ENCODE measurements at regions of chr5 and their contacts with region 1.

Region 1: GRCh38 chr5:141968914-141969608 is at the start of gene RNF14:
- DNase-seq: peak; percentile 95
- ATAC-seq: peak; percentile 91
- H3K4me3 ChIP-seq: peak within 1 kb of the TSS; percentile 63 to 95 (median 86)
- H3K4me3 Mint-ChIP-seq: peak within 1 kb of the TSS; percentile 96
- H3K27ac ChIP-seq: peak within 1 kb of the TSS; percentile 90 to 93
- H3K27ac Mint-ChIP-seq: peak within 1 kb of the TSS; percentile 98
- H3K4me1 ChIP-seq: peaks cover 19 to 34% of the 10 kb centered on the region in 2 donors
- H3K4me1 Mint-ChIP-seq: peaks cover 41% of the 10 kb centered on the region
- H3K27me3 ChIP-seq: no peaks in the 10 kb centered on the region
- H3K27me3 Mint-ChIP-seq: no peaks in the 10 kb centered on the region
- CTCF ChIP-seq: peak; percentile 99
- total RNA-seq, gene RNF14: 26.6 and 28.1 TPM in 2 replicates

Region 2: GRCh38 chr5:141557681-141558136 is 411.4 kb before region 1 on chr5:
- CTCF ChIA-PET with region 1: no interaction called
- POLR2A ChIA-PET with region 1: no interaction called
- intact Hi-C with region 1: no loop called
- DNase-seq: peak; percentile 80
- ATAC-seq: peak; percentile 81
- H3K4me3 ChIP-seq: no peak overlapping the region
- H3K4me3 Mint-ChIP-seq: no peak overlapping the region
- H3K27ac ChIP-seq: no peak overlapping the region
- H3K27ac Mint-ChIP-seq: peak overlapping the region; percentile 80
- H3K4me1 ChIP-seq: no peaks in the 10 kb centered on the region
- H3K4me1 Mint-ChIP-seq: peaks cover 4% of the 10 kb centered on the region
- H3K27me3 ChIP-seq: no peaks in the 10 kb centered on the region
- H3K27me3 Mint-ChIP-seq: no peaks in the 10 kb centered on the region
- CTCF ChIP-seq: peak; percentile 82

Region 3: GRCh38 chr5:141636413-141637122 is 332.5 kb before region 1 on chr5 and contains the starts of genes HDAC3 and RELL2:
- CTCF ChIA-PET with region 1: interaction called, 11 read pairs
- POLR2A ChIA-PET with region 1: no interaction called
- intact Hi-C with region 1: loop called (anchors 1 kb)
- DNase-seq: peak; percentile 94
- ATAC-seq: peak; percentile 89
- H3K4me3 ChIP-seq: peak within 1 kb of the TSS; percentile 70 to 99 (median 82)
- H3K4me3 Mint-ChIP-seq: peak within 1 kb of the TSS; percentile 94
- H3K27ac ChIP-seq: peak within 1 kb of the TSS; percentile 58 to 77
- H3K27ac Mint-ChIP-seq: peak within 1 kb of the TSS; percentile 85
- H3K4me1 ChIP-seq: peaks cover 30 to 36% of the 10 kb centered on the region in 2 donors
- H3K4me1 Mint-ChIP-seq: peaks cover 39% of the 10 kb centered on the region
- H3K27me3 ChIP-seq: no peaks in the 10 kb centered on the region
- H3K27me3 Mint-ChIP-seq: no peaks in the 10 kb centered on the region
- CTCF ChIP-seq: no peak
- total RNA-seq, gene HDAC3: 85.5 and 86.9 TPM in 2 replicates
- total RNA-seq, gene RELL2: 11.6 and 12.1 TPM in 2 replicates

Region 4: GRCh38 chr5:141664732-141665461 is 304.2 kb before region 1 on chr5:
- CTCF ChIA-PET with region 1: interaction called, 13 read pairs
- POLR2A ChIA-PET with region 1: no interaction called
- intact Hi-C with region 1: no loop called
- DNase-seq: peak; percentile 85
- ATAC-seq: peak; percentile 98
- H3K4me3 ChIP-seq: no peak overlapping the region
- H3K4me3 Mint-ChIP-seq: no peak overlapping the region
- H3K27ac ChIP-seq: no peak overlapping the region
- H3K27ac Mint-ChIP-seq: no peak overlapping the region
- H3K4me1 ChIP-seq: peaks cover 4 to 6% of the 10 kb centered on the region in 2 donors
- H3K4me1 Mint-ChIP-seq: peaks cover 4% of the 10 kb centered on the region
- H3K27me3 ChIP-seq: peaks cover 0 to 4% (median 0%) of the 10 kb centered on the region in 4 experiments
- H3K27me3 Mint-ChIP-seq: peaks cover 5% of the 10 kb centered on the region
- CTCF ChIP-seq: peak; percentile 91

Region 5: DNA sequence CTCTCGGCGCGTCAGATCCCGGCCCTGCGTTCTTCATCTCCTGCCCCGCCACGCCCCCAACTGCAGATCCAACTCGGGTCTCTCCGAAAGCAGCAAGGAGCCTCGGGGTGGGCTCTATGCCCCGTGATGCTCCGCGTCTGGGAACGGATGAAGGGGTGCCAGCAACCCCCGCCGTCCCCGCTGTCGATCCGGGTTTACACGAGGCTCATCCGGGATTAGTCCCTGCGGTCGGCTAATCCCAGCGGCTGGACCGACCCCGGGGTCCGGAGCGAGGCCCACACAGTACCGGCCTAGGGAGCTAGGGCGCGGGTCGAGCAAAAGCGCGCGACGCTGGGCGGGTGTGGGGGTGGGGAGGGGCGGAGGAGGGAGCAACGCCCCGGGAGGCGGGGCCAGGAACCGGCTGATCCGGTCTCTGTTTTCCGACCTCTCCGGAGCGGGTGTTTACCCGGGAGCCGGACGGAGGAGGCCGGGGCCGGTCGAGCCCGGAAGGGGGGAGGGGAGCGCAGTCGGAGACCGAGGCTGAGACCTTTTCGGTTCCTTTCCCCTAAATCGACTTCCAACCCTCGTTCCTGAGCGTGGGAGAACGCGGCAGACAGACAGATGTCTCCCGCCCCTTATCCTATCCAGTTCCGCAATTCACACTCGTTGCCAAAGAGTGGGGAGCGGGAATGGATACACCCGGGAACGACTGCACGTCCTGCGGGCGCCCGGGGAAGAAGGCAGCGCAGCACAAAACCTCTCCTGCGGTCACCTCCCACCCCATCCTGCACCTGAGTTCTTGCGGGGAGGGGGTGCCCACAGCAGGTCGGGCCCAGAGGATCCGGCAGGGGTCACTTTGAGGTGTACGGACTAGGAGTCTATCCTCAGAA is 119.5 kb before region 1 on chr5:
- CTCF ChIA-PET with region 1: no interaction called
- POLR2A ChIA-PET with region 1: interaction called, 11 read pairs
- intact Hi-C with region 1: no loop called
- DNase-seq: peak; percentile 79
- ATAC-seq: peak; percentile 83
- H3K4me3 ChIP-seq: peak overlapping the region; percentile 75 to 95 (median 78)
- H3K4me3 Mint-ChIP-seq: peak overlapping the region; percentile 91
- H3K27ac ChIP-seq: peak overlapping the region; percentile 55 to 70
- H3K27ac Mint-ChIP-seq: peak overlapping the region; percentile 88
- H3K4me1 ChIP-seq: peaks cover 9 to 12% of the 10 kb centered on the region in 2 donors
- H3K4me1 Mint-ChIP-seq: peaks cover 9% of the 10 kb centered on the region
- H3K27me3 ChIP-seq: peaks cover 0 to 4% (median 2%) of the 10 kb centered on the region in 4 experiments
- H3K27me3 Mint-ChIP-seq: peaks cover 16% of the 10 kb centered on the region
- CTCF ChIP-seq: no peak

Region 6: GRCh38 chr5:141923448-141924352 is 45.4 kb before region 1 on chr5 and contains the start of gene DELE1:
- CTCF ChIA-PET with region 1: interaction called, 12 read pairs
- POLR2A ChIA-PET with region 1: interaction called, 11 read pairs
- intact Hi-C with region 1: loop called (anchors 1 kb)
- DNase-seq: peak; percentile 94
- ATAC-seq: peak; percentile 94
- H3K4me3 ChIP-seq: peak within 1 kb of the TSS; percentile 63 to 92 (median 85)
- H3K4me3 Mint-ChIP-seq: peak within 1 kb of the TSS; percentile 92
- H3K27ac ChIP-seq: peak within 1 kb of the TSS; percentile 95 to 98
- H3K27ac Mint-ChIP-seq: peak within 1 kb of the TSS; percentile 96
- H3K4me1 ChIP-seq: peaks cover 12 to 18% of the 10 kb centered on the region in 2 donors
- H3K4me1 Mint-ChIP-seq: peaks cover 20% of the 10 kb centered on the region
- H3K27me3 ChIP-seq: no peaks in the 10 kb centered on the region
- H3K27me3 Mint-ChIP-seq: no peaks in the 10 kb centered on the region
- CTCF ChIP-seq: no peak
- total RNA-seq, gene DELE1: 124 and 134 TPM in 2 replicates

Region 7: DNA sequence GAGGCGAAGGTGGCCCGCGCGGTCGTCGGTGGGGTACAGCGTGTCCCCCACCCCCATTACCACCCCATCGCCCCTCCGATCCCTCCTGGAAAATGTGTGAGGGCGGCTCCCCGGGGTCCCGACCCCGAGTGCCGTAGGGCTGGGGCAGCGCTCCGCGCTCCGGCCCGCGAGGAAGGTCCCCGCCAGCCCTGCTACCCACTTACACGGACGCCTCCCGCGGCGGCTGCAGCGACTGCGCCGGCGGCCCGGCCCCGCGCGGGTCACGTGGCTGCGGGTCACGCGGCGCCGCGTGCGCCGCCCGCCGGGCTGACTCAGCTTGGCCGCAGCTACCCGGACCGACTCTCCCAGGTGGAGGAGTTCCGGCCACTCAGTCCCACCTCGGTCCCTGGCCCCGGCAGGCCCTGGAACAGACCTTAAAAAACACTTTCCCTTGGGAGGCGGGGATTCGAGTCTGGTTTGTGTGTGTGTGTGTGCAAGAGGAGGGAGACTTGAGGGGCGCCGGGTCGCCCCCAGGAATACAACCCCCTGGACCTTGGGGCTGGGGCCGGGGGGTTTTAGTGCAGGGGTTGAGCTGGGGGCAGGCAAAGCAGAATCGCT is 43.8 kb after region 1 on chr5 and contains the start of gene GNPDA1:
- CTCF ChIA-PET with region 1: interaction called, 14 read pairs
- POLR2A ChIA-PET with region 1: no interaction called
- intact Hi-C with region 1: loop called (anchors 2 kb)
- DNase-seq: peak; percentile 83
- ATAC-seq: peak; percentile 88
- H3K4me3 ChIP-seq: peak within 1 kb of the TSS; percentile 44 to 74 (median 67)
- H3K4me3 Mint-ChIP-seq: peak within 1 kb of the TSS; percentile 89
- H3K27ac ChIP-seq: peak within 1 kb of the TSS; percentile 45 to 59
- H3K27ac Mint-ChIP-seq: peak within 1 kb of the TSS; percentile 78
- H3K4me1 ChIP-seq: peaks cover 27 to 30% of the 10 kb centered on the region in 2 donors
- H3K4me1 Mint-ChIP-seq: peaks cover 43% of the 10 kb centered on the region
- H3K27me3 ChIP-seq: no peaks in the 10 kb centered on the region
- H3K27me3 Mint-ChIP-seq: peaks cover 3% of the 10 kb centered on the region
- CTCF ChIP-seq: no peak
- total RNA-seq, gene GNPDA1: 12.1 and 15.0 TPM in 2 replicates

Region 8: DNA sequence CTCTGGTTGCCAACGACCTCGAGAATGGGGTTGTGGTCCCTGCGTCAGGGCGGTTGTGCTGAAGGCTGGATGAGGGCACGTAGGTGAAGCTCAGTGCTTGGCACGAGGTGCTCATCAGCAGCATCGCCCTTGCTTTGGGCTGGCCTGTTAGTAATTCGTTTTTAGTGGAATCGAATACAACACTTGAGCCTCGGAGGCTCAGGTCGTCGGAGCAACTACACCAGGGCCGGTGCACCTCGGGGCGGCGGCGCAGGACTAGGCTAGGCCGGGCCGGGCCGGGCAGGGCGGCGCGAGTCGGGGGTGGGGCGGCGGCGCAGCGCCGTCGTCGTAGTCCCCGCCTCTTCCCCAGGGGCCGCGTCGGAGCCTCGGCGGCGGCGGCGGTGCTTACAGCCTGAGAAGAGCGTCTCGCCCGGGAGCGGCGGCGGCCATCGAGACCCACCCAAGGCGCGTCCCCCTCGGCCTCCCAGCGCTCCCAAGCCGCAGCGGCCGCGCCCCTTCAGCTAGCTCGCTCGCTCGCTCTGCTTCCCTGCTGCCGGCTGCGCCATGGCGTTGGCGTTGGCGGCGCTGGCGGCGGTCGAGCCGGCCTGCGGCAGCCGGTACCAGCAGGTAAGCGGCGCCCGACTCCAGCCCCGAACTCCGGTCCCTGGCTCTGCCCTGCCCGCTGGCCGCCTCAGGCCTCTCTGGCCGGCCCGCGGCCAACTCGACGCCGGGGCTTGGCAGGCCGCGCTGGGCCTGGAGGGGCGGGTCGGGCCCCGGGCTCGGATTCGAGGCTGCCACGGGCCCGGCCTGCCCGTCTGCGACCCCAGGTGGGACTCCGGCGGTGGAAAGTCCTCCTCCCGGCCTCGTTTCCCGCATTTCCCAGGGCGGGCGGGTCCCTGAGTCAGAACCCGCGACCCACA is 139.6 kb after region 1 on chr5 and contains the start of gene NDFIP1:
- CTCF ChIA-PET with region 1: interaction called, 8 read pairs
- POLR2A ChIA-PET with region 1: no interaction called
- intact Hi-C with region 1: loop called (anchors 1 kb)
- DNase-seq: peak; percentile 91
- ATAC-seq: peak; percentile 98
- H3K4me3 ChIP-seq: peak within 1 kb of the TSS; percentile 62 to 90 (median 77)
- H3K4me3 Mint-ChIP-seq: peak within 1 kb of the TSS; percentile 92
- H3K27ac ChIP-seq: peak within 1 kb of the TSS; percentile 49 to 83
- H3K27ac Mint-ChIP-seq: peak within 1 kb of the TSS; percentile 93
- H3K4me1 ChIP-seq: peaks cover 14 to 17% of the 10 kb centered on the region in 2 donors
- H3K4me1 Mint-ChIP-seq: peaks cover 31% of the 10 kb centered on the region
- H3K27me3 ChIP-seq: no peaks in the 10 kb centered on the region
- H3K27me3 Mint-ChIP-seq: no peaks in the 10 kb centered on the region
- CTCF ChIP-seq: no peak
- total RNA-seq, gene NDFIP1: 34.6 TPM in 2 replicates

Region 9: DNA sequence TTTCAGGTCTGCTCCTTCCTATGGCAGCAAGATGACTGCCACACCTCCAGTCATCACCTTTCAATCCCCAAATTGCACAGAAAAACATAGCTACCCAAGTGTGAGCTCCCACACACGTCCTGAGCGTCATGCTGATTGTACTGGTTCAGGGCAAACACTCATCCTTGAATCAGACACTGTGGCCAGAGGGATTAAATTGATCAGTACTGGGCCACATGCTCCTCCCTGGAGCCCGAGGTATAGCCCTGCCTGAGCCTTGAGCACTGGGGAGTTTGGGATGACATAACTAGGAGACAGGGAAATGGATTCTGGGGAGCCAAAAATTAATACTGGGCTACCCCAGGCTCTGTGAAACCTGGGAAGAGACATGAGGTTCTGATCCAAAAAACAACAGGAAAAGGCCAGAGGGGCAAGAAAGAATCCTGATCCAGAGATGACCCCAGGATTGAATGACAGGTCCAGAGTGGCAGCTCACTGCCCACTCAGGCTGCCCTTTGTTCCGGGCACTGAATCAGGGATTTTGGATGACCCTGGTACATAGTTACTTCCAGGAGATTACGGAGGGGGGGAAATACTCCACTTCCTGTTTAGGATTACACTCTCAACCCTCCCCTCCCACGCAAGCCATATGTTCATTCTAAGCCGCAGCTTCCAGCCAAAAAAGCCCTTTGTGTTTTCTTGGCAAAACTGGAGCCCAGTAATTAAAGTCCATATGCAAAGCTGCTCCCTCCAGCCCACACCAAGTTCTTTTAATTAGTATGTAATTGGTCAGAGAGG is 497.3 kb after region 1 on chr5:
- CTCF ChIA-PET with region 1: no interaction called
- POLR2A ChIA-PET with region 1: no interaction called
- intact Hi-C with region 1: no loop called
- DNase-seq: no peak
- ATAC-seq: no peak
- H3K4me3 ChIP-seq: no peak overlapping the region
- H3K4me3 Mint-ChIP-seq: no peak overlapping the region
- H3K27ac ChIP-seq: no peak overlapping the region
- H3K27ac Mint-ChIP-seq: no peak overlapping the region
- H3K4me1 ChIP-seq: no peaks in the 10 kb centered on the region
- H3K4me1 Mint-ChIP-seq: no peaks in the 10 kb centered on the region
- H3K27me3 ChIP-seq: peaks cover 0 to 3% (median 0%) of the 10 kb centered on the region in 4 experiments
- H3K27me3 Mint-ChIP-seq: peaks cover 12% of the 10 kb centered on the region
- CTCF ChIP-seq: no peak

Region 10: DNA sequence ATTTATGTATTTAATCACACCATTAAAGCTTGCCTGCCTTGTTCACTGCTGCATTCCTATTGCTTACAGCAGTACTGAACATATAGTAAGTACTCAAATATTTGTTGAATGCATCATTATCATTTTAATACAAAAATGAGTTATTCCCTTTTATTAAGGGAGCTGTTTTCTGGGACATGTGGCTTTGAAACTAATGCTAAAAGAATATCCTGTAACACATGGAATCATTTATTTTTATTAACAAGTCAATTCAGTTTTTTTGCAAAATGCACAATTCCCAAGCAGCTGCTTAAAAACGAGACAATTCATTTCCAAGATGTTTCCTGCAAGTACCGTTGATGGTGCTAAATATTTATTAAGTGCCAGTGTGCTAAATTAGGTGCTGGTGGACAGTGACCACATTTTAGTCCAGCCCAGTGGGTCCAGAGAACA is 1582.8 kb after region 1 on chr5:
- CTCF ChIA-PET with region 1: no interaction called
- POLR2A ChIA-PET with region 1: no interaction called
- intact Hi-C with region 1: no loop called
- DNase-seq: no peak
- ATAC-seq: no peak
- H3K4me3 ChIP-seq: no peak overlapping the region
- H3K4me3 Mint-ChIP-seq: no peak overlapping the region
- H3K27ac ChIP-seq: no peak overlapping the region
- H3K27ac Mint-ChIP-seq: no peak overlapping the region
- H3K4me1 ChIP-seq: no peaks in the 10 kb centered on the region
- H3K4me1 Mint-ChIP-seq: no peaks in the 10 kb centered on the region
- H3K27me3 ChIP-seq: no peaks in the 10 kb centered on the region
- H3K27me3 Mint-ChIP-seq: no peaks in the 10 kb centered on the region
- CTCF ChIP-seq: no peak

Measured in B cell (primary cell).